BJ (cell line): ENCODE measurements at regions of chr17 and their contacts with region 1.

Region 1: DNA sequence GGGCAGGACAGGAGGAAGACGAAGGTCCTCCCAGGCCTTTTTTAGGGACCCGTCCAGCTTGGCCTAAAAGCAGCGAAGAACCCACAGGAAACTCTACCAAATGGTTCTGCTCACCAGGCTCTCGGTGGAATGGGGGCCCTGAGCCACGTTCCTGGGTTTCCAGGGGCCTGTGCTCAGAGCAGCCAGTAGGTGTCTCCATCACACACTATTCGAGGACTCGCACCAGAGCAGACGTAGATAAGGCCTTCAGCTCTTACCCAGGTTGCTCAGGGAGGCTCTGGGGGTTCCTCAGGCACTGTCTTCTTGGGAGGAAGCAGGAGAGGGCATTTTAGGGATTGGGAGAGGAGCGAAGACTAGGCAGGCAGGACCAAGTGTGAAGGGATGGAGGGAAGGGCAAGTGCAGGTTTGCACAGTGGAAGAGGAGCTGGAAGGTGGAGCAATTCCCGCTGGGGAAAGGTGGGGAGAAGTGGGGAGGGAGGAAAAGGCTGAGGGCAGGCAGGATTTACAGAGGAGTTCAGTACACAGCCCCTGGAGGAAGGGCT is 157.1 kb downstream of the RGS9 start:
- DNase-seq: no peak
- H3K4me3 ChIP-seq: no peak overlapping the region
- H3K27me3 ChIP-seq: peaks cover 9% of the 10 kb centered on the region
- CTCF ChIP-seq: peak; percentile 90

Region 2: DNA sequence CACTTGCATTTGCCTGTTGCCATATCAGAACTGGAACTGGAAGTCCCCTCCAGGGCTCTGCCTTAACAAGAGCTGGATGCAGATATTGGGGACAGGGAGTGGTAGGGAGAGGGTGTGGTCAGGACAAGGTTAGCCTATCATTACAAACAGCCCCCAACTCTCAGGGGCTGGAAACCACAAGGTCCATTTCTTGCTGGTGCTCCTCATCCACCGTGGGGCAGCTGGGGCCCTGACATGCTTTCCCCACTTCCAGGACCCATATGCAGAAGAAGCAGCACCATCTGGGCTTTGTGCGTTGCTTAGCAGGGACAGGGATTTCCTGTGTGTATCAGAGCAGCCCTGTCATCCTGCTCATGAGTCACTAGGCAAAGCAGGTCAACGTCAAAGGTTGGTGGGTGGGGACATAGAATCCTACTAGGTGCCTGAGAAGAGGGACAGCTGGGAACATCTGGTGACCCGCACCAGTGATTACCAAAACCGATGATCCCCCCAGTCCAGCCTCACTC is 130.2 kb before region 1 on chr17:
- CTCF ChIA-PET with region 1: no interaction called
- POLR2A ChIA-PET with region 1: no interaction called
- DNase-seq: no peak
- H3K4me3 ChIP-seq: no peak overlapping the region
- H3K27me3 ChIP-seq: no peaks in the 10 kb centered on the region
- CTCF ChIP-seq: no peak

Region 3: DNA sequence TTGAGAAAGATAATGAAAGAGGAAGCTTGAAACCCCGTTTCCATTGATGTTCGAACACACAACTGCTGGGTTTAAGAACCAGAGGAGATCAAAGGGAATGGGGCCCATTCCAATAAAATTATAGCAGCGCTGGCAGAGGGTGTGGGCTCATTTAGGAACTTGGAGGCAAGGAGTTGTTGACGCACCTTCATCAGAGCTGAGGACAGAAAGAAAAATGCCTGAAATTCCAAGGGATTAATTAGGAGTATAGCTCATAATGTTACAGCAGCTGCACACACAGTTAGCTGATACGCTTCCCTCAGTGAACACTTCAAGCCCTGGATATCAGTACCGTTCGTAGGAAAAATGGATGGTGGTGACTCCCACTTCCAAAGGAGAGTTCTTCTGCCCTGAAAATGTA is 140.0 kb after region 1 on chr17:
- CTCF ChIA-PET with region 1: no interaction called
- POLR2A ChIA-PET with region 1: no interaction called
- DNase-seq: no peak
- H3K4me3 ChIP-seq: no peak overlapping the region
- H3K27me3 ChIP-seq: peaks cover 3% of the 10 kb centered on the region
- CTCF ChIP-seq: no peak

Region 4: DNA sequence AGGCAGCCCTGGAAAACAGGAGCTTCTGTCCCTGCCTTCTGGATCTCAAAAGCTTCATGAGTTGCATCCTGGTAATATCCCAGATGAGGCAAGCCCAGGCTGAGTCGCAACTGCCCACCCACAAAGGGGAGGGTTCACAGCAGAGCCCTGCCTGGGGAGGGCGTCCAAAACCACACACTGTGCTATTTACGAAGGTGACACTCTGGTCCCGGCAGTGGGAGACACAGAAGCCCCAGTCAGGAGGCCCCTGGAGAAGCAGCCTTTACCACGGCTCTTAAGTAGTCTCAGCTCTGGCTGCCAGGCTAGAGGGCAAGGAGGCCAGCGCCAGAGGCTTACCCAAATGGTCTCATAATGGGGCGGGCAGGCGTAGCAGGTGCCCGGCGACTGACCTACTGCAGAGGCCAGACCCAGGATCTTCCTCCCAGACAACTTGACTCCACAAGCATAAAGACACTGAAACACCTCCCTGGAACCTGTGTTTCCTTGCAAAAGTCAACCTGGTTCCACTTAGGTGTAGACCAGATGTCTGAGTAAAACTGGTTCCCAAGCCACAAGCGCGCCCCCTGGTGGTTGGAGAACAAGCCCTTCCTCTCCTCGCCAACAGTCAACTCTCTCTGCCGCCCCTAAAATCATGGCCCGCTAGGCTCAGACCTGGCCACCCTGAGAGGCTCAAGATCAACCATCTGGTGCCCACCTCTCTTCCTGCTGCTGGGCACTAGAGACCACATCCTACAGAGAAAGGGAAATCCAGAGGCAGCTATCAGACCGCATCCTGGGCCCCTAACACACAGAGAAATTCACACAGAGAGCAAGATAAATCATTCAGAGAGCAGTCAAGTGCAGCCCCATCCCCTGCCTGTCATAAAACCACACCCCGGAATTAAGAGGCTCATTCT is 262.0 kb after region 1 on chr17:
- CTCF ChIA-PET with region 1: interaction called, 38 read pairs
- POLR2A ChIA-PET with region 1: no interaction called
- DNase-seq: no peak
- H3K4me3 ChIP-seq: no peak overlapping the region
- H3K27me3 ChIP-seq: peaks cover 11% of the 10 kb centered on the region
- CTCF ChIP-seq: peak; percentile 88

Region 5: DNA sequence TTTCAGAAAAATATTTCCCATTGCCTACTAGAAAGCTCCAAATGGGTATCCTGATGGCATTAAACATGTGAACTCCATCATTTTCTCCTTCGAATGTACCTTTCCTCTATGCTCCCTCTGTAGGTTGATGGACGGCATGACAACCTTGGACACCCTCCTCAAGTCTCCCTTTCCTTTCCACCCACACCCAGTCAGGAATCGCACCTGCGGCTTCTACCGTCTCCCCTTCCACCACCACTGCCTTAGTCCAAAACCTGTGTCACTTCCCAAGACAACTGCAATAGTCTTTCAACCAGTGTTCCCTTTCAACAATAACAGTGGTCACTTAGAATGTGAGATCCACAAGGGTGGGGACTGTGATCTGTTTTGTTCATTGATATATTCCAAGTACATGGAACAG is 500.3 kb after region 1 on chr17:
- CTCF ChIA-PET with region 1: interaction called, 11 read pairs
- POLR2A ChIA-PET with region 1: no interaction called
- DNase-seq: no peak
- H3K4me3 ChIP-seq: no peak overlapping the region
- H3K27me3 ChIP-seq: no peaks in the 10 kb centered on the region
- CTCF ChIP-seq: peak; percentile 57

Region 6: DNA sequence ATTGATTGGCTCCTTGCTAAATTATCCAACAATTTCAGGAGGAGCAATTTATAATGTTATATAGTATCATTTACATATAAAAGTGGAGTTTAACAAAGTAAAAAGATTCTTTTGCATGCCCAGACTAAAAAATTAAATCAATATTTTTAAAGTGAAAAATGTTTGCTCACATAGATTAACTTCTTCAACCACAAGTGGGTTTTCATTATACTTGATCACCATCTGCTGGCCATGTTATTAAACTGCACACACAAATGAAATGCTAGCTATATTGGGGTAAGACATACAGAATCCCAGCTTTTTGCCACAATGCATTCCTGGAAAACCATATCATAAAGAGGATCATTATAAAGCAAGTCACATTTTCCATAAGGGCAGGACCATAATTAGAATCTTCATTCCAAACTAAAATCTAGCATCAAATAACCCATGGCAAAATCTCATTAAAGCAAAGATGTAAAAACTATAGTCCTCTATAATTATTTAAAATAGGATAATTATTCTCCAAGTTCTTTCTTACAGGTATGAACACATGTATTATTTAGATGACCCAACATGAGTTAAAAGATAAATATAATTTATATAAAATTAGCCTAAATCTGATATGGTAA is 871.4 kb after region 1 on chr17:
- CTCF ChIA-PET with region 1: interaction called, 41 read pairs
- POLR2A ChIA-PET with region 1: no interaction called
- DNase-seq: peak; percentile 10
- H3K4me3 ChIP-seq: no peak overlapping the region
- H3K27me3 ChIP-seq: no peaks in the 10 kb centered on the region
- CTCF ChIP-seq: peak; percentile 62